Caco-2 (cell line): ENCODE measurements at regions of chr11 and their contacts with region 1.

Region 1: GRCh38 chr11:47152953-47153950 is 23.4 kb downstream of the ARFGAP2 start:
- DNase-seq: peak; percentile 79 to 89
- H3K4me3 ChIP-seq: no peak overlapping the region
- H3K4me3 Mint-ChIP-seq: no peak overlapping the region
- H3K27ac Mint-ChIP-seq: no peak overlapping the region
- H3K4me1 ChIP-seq: no peaks in the 10 kb centered on the region
- H3K4me1 Mint-ChIP-seq: peaks cover 3% of the 10 kb centered on the region
- H3K27me3 ChIP-seq: no peaks in the 10 kb centered on the region
- H3K27me3 Mint-ChIP-seq: no peaks in the 10 kb centered on the region
- CTCF ChIP-seq: peak; percentile 96 to 98

Region 2: GRCh38 chr11:46889689-46890475 is 263.4 kb before region 1 on chr11:
- CTCF ChIA-PET with region 1: interaction called, 5 read pairs
- POLR2A ChIA-PET with region 1: no interaction called
- intact Hi-C with region 1: loop called (anchors 1 kb)
- DNase-seq: peak; percentile 67 to 81
- H3K4me3 ChIP-seq: no peak overlapping the region
- H3K4me3 Mint-ChIP-seq: no peak overlapping the region
- H3K27ac Mint-ChIP-seq: no peak overlapping the region
- H3K4me1 ChIP-seq: no peaks in the 10 kb centered on the region
- H3K4me1 Mint-ChIP-seq: no peaks in the 10 kb centered on the region
- H3K27me3 ChIP-seq: no peaks in the 10 kb centered on the region
- H3K27me3 Mint-ChIP-seq: no peaks in the 10 kb centered on the region
- CTCF ChIP-seq: peak; percentile 85 to 91

Region 3: DNA sequence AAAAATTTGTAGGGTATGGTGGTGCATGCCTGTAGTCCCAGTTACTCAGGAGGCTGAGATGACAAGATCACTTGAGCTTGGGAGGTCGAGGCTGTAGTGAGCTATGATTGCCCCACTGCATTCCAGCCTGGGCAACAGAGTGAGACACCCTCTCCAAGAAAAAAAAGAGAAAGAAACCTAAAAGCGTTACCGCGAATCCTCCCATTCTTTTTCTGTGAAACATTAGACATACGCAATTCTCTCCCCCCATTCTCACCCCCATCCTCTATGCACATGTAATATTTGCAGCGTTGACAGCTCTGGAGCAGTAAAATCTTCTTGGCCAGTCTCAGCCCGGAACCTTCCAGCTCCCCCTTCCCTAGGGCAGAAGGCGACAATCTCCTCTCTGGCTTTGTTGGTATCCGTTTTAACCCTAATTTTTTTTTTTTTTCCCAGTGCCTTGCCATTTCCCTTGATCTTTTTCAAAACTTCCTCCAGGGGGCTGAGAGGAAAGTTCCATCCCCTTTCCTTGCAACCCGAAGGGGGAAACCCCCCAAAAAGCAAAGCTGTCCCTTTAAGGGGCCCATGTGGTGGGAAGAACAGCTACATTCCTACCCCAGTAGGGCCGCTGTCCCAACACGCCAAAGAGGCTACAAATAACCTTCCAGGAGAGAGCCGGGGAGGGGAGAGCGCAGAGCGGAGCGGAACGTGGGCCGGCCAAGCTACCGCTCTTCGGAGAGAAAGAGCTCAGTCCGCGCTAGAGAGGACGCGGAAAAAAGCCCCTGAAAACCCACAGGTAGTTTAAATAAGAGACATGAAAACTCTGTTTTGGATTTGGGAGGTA is 236.8 kb before region 1 on chr11:
- CTCF ChIA-PET with region 1: interaction called, 19 read pairs
- POLR2A ChIA-PET with region 1: no interaction called
- intact Hi-C with region 1: loop called (anchors 1 kb)
- DNase-seq: peak; percentile 66 to 69
- H3K4me3 ChIP-seq: peak overlapping the region; percentile 74
- H3K4me3 Mint-ChIP-seq: peak overlapping the region; percentile 88
- H3K27ac Mint-ChIP-seq: peak overlapping the region; percentile 65
- H3K4me1 ChIP-seq: peaks cover 11% of the 10 kb centered on the region; the same call in 1 of the 2 replicates
- H3K4me1 Mint-ChIP-seq: peaks cover 20% of the 10 kb centered on the region
- H3K27me3 ChIP-seq: no peaks in the 10 kb centered on the region
- H3K27me3 Mint-ChIP-seq: no peaks in the 10 kb centered on the region
- CTCF ChIP-seq: peak in 1 of 2 experiments; percentile 36

Region 4: GRCh38 chr11:47020793-47021526 is 132.3 kb before region 1 on chr11:
- CTCF ChIA-PET with region 1: interaction called, 3 read pairs
- POLR2A ChIA-PET with region 1: no interaction called
- intact Hi-C with region 1: loop called (anchors 10 kb)
- DNase-seq: no peak
- H3K4me3 ChIP-seq: no peak overlapping the region
- H3K4me3 Mint-ChIP-seq: no peak overlapping the region
- H3K27ac Mint-ChIP-seq: no peak overlapping the region
- H3K4me1 ChIP-seq: no peaks in the 10 kb centered on the region
- H3K4me1 Mint-ChIP-seq: no peaks in the 10 kb centered on the region
- H3K27me3 ChIP-seq: no peaks in the 10 kb centered on the region
- H3K27me3 Mint-ChIP-seq: no peaks in the 10 kb centered on the region
- CTCF ChIP-seq: no peak

Region 5: DNA sequence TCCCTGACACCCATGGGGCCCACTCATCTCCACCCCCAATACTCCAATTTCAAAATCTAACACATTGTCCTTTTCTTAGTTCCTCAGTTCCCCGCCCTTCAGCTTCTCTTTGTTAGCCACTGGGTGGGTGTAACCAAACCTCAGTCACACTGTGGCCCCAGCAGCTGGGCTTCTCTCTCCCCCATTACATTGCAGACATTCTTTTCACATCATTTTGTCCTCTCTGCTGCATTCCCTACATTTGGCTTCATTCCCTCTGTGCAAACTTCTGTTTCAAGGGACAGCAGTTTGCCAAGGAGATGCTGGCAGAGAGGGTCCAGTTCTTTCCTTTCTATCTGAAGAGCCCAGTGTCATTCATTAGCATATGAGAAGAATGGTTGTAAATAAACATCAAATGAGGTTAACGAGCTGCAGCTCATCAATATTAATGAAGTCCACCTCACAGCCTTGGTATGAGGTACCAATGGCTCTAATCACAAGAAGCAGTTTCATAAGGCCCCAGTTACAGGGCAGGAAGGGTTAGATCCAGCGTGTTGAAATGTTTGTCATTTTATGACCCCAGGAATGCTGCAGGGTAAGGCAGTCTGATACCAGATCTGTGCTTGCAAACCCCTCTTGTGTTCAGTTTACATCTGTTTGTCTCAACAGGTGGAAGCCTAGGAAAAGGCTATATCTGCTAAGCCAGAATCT is 48.8 kb before region 1 on chr11:
- CTCF ChIA-PET with region 1: no interaction called
- POLR2A ChIA-PET with region 1: no interaction called
- intact Hi-C with region 1: loop called (anchors 2 kb)
- DNase-seq: peak; percentile 54 to 68
- H3K4me3 ChIP-seq: no peak overlapping the region
- H3K4me3 Mint-ChIP-seq: peak overlapping the region; percentile 22
- H3K27ac Mint-ChIP-seq: peak overlapping the region; percentile 62
- H3K4me1 ChIP-seq: peaks cover 18% of the 10 kb centered on the region
- H3K4me1 Mint-ChIP-seq: peaks cover 10% of the 10 kb centered on the region
- H3K27me3 ChIP-seq: no peaks in the 10 kb centered on the region
- H3K27me3 Mint-ChIP-seq: no peaks in the 10 kb centered on the region
- CTCF ChIP-seq: no peak

Region 6: GRCh38 chr11:47204637-47204989 is 51.4 kb after region 1 on chr11:
- CTCF ChIA-PET with region 1: no interaction called
- POLR2A ChIA-PET with region 1: no interaction called
- intact Hi-C with region 1: no loop called
- DNase-seq: no peak
- H3K4me3 ChIP-seq: no peak overlapping the region
- H3K4me3 Mint-ChIP-seq: no peak overlapping the region
- H3K27ac Mint-ChIP-seq: no peak overlapping the region
- H3K4me1 ChIP-seq: peaks cover 13% of the 10 kb centered on the region; the same call in 1 of the 2 replicates
- H3K4me1 Mint-ChIP-seq: peaks cover 9% of the 10 kb centered on the region
- H3K27me3 ChIP-seq: no peaks in the 10 kb centered on the region
- H3K27me3 Mint-ChIP-seq: no peaks in the 10 kb centered on the region
- CTCF ChIP-seq: no peak